ENCODE measurements at regions of chr14 and their contacts with region 1.

Region 1: DNA sequence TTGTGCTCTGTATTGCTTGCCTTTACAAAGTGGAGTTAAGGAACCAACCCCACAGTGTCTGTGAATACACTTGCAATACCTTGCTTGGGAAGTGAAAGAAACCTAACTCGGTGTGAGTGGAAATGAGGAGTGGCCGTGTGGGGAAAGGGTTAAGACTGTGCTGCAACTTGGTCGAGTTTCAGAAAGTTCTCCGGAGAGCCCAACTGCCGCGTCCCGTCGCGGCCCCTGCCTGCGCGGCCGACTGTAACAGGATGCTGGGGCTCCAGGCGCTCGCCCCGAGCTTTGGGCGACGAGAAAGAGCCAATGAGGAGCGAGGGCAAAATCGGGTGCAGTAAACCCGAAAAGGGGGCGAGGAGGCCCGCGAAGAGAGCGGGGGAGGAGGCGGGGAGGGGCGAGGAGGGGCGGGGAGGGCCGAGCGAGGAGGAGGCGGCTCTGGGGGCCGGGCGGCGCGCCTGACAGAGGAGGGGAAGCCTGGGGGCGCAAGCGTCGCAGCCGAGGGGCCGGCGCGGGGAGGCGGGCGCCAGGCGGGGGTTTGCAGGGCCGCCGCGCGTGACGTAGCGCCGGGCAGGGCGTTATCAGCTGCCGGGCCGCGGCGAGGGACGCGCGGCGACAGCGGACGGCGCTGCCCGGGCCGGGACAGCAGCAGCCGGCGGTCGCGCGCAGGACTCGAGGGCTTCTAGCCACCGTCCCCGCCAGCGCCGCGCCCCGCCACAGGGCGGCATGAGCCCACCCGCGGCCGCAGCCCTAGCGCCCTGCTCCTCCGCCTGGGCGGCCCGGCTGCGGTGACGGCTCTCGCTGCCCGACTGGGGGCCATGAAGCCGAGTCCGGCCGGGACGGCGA is at the start of gene DACT1:
- DNase-seq: peak; percentile 87 to 93
- ATAC-seq: peak; percentile 85
- H3K4me3 ChIP-seq: peak within 1 kb of the TSS; percentile 75 to 93
- H3K27ac ChIP-seq: peak within 1 kb of the TSS; percentile 96 to 100
- H3K4me1 ChIP-seq: peaks cover 3% of the 10 kb centered on the region in 2 donors
- H3K27me3 ChIP-seq: no peaks in the 10 kb centered on the region
- total RNA-seq, gene DACT1: 33.6 to 43.6 TPM

Region 2: GRCh38 chr14:58390830-58391229 is 246.8 kb before region 1 on chr14:
- intact Hi-C with region 1: no loop called
- DNase-seq: no peak
- ATAC-seq: no peak
- H3K4me3 ChIP-seq: no peak overlapping the region
- H3K27ac ChIP-seq: no peak overlapping the region
- H3K4me1 ChIP-seq: no peaks in the 10 kb centered on the region
- H3K27me3 ChIP-seq: no peaks in the 10 kb centered on the region

Region 3: DNA sequence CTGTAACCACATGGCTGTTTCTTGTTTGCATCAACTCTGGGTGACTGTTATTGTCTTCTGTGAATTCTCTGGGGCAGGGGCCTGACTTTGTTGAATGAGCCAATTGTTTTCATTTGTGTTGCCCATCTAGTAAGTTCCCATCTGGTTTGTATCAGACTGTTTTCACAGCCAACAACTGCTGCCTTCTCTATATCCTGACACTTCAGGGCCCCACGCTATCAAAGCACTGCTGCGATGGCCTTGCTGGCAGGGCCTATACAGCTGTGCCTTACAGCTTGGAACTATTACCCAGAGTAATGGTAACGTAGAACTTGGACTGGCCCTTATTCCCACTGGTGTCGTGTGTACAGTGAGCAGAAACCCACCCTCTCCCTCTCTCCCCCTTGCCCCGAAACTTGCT is 104.2 kb before region 1 on chr14:
- intact Hi-C with region 1: loop called in 1 of 2 experiments (anchors 10 kb)
- DNase-seq: no peak
- ATAC-seq: peak; percentile 68
- H3K4me3 ChIP-seq: no peak overlapping the region
- H3K27ac ChIP-seq: peak overlapping the region; percentile 97 to 98
- H3K4me1 ChIP-seq: peaks cover 0 to 4% of the 10 kb centered on the region in 2 donors
- H3K27me3 ChIP-seq: no peaks in the 10 kb centered on the region

Region 4: GRCh38 chr14:58731465-58732330 is 94.1 kb after region 1 on chr14:
- intact Hi-C with region 1: loop called (anchors 5 kb)
- DNase-seq: no peak
- ATAC-seq: peak; percentile 66
- H3K4me3 ChIP-seq: no peak overlapping the region
- H3K27ac ChIP-seq: peak overlapping the region; percentile 28 to 63
- H3K4me1 ChIP-seq: peaks cover 0 to 2% of the 10 kb centered on the region in 2 donors
- H3K27me3 ChIP-seq: no peaks in the 10 kb centered on the region

Region 5: GRCh38 chr14:59028476-59029202 is 391.0 kb after region 1 on chr14:
- intact Hi-C with region 1: loop called in 1 of 2 experiments (anchors 10 kb)
- DNase-seq: peak; percentile 72 to 80
- ATAC-seq: peak; percentile 83
- H3K4me3 ChIP-seq: no peak overlapping the region
- H3K27ac ChIP-seq: no peak overlapping the region
- H3K4me1 ChIP-seq: no peaks in the 10 kb centered on the region
- H3K27me3 ChIP-seq: no peaks in the 10 kb centered on the region

Region 6: GRCh38 chr14:59126710-59127432 is 489.3 kb after region 1 on chr14:
- intact Hi-C with region 1: loop called in 1 of 2 experiments (anchors 10 kb)
- DNase-seq: no peak
- ATAC-seq: peak; percentile 85
- H3K4me3 ChIP-seq: no peak overlapping the region
- H3K27ac ChIP-seq: no peak overlapping the region
- H3K4me1 ChIP-seq: no peaks in the 10 kb centered on the region
- H3K27me3 ChIP-seq: no peaks in the 10 kb centered on the region

Region 7: GRCh38 chr14:59438195-59438647 is 800.6 kb after region 1 on chr14:
- intact Hi-C with region 1: loop called in 1 of 2 experiments (anchors 5 kb)
- DNase-seq: no peak
- ATAC-seq: no peak
- H3K4me3 ChIP-seq: no peak overlapping the region
- H3K27ac ChIP-seq: no peak overlapping the region
- H3K4me1 ChIP-seq: peaks cover 3 to 8% of the 10 kb centered on the region in 2 donors
- H3K27me3 ChIP-seq: no peaks in the 10 kb centered on the region

Measured in aorta (tissue), 5 donors.